ENCODE measurements at regions of chr14 and their contacts with region 1.

Region 1: GRCh38 chr14:38278035-38278434 is 22.1 kb upstream of the CLEC14A start:
- DNase-seq: no peak
- ATAC-seq: no peak
- H3K4me3 Mint-ChIP-seq: no peak overlapping the region
- H3K27ac Mint-ChIP-seq: no peak overlapping the region
- H3K4me1 Mint-ChIP-seq: no peaks in the 10 kb centered on the region
- H3K27me3 Mint-ChIP-seq: no peaks in the 10 kb centered on the region

Region 2: DNA sequence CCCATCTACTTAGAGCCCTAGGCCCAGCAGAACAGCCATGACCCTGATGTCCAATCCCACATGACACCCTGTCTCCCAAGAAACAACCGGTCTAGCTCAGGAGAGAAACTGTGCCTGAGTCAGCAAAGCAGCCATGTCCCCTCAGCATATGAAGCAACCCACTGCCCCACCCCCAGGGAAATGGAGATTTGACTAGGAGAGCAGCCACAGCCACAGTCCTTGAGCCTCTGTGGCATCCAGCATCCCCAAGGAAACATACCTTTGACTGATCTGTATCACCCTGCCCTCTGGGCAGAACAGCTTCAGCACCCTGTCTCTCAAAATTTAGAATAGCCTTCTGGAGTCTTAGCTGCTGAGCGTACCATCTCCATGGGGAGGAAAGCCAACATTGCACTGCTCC is 1796.2 kb after region 1 on chr14:
- CTCF ChIA-PET with region 1: no interaction called
- POLR2A ChIA-PET with region 1: no interaction called
- intact Hi-C with region 1: loop called in 1 of 2 experiments (anchors 5 kb)
- DNase-seq: no peak
- ATAC-seq: no peak
- H3K4me3 Mint-ChIP-seq: no peak overlapping the region
- H3K27ac Mint-ChIP-seq: no peak overlapping the region
- H3K4me1 Mint-ChIP-seq: no peaks in the 10 kb centered on the region
- H3K27me3 Mint-ChIP-seq: no peaks in the 10 kb centered on the region

Measured in activated CD4-positive, alpha-beta T cell treated with anti-CD3 and anti-CD28 coated beads for 36 hours (primary cell).